HCT116 (cell line): ENCODE measurements at regions of chr3 and their contacts with region 1.

Region 1: GRCh38 chr3:6799264-6799915 is 61.5 kb upstream of the GRM7 start:
- DNase-seq: peak; percentile 19
- ATAC-seq: peak; percentile 74; the same call in 1 of the 2 replicates
- H3K4me3 ChIP-seq: no peak overlapping the region
- H3K27ac ChIP-seq: no peak overlapping the region
- H3K4me1 ChIP-seq: no peaks in the 10 kb centered on the region
- H3K27me3 ChIP-seq: no peaks in the 10 kb centered on the region
- CTCF ChIP-seq: peak; percentile 27 to 81 (median 80); a peak in 5 of 6 replicates
- POLR2A ChIP-seq: no peak
- RAD21 ChIP-seq: peak; percentile 62

Region 2: GRCh38 chr3:5426094-5426883 is 1373.1 kb before region 1 on chr3:
- CTCF ChIA-PET with region 1: no interaction called
- POLR2A ChIA-PET with region 1: no interaction called
- RAD21 ChIA-PET with region 1: no interaction called
- intact Hi-C with region 1: loop called (anchors 10 kb)
- DNase-seq: peak; percentile 71
- ATAC-seq: peak; percentile 100
- H3K4me3 ChIP-seq: no peak overlapping the region
- H3K27ac ChIP-seq: no peak overlapping the region
- H3K4me1 ChIP-seq: peaks cover 0 to 4% of the 10 kb centered on the region in 2 experiments; a peak in 1 of 4 replicates
- H3K27me3 ChIP-seq: no peaks in the 10 kb centered on the region
- CTCF ChIP-seq: peak; percentile 59 to 96 (median 93); a peak in 5 of 6 replicates
- POLR2A ChIP-seq: no peak
- RAD21 ChIP-seq: peak; percentile 88

Region 3: DNA sequence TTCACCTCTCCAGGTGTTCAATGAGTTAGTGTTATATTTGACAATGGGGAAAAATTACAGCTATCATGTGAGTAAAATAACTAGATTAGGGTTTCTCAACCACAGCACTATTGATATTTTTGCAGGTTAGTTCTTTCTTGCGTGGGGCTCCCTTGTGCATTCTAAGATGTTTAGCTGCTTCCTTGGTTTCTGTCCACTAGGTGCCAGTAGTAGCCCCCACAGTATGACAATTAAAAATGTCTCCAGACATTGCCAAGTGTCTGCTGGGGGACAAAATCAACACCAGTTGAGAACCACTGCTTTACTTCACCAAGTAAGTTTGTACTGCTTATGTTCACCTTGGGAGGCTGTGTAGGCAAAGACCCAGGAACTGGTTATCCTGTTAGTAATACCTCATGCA is 993.2 kb before region 1 on chr3:
- CTCF ChIA-PET with region 1: no interaction called
- POLR2A ChIA-PET with region 1: no interaction called
- RAD21 ChIA-PET with region 1: no interaction called
- intact Hi-C with region 1: loop called (anchors 5 kb)
- DNase-seq: no peak
- ATAC-seq: peak; percentile 82
- H3K4me3 ChIP-seq: no peak overlapping the region
- H3K27ac ChIP-seq: no peak overlapping the region
- H3K4me1 ChIP-seq: no peaks in the 10 kb centered on the region
- H3K27me3 ChIP-seq: no peaks in the 10 kb centered on the region
- CTCF ChIP-seq: peak; percentile 30 to 61 (median 58); a peak in 5 of 6 replicates
- POLR2A ChIP-seq: no peak
- RAD21 ChIP-seq: peak; percentile 55

Region 4: DNA sequence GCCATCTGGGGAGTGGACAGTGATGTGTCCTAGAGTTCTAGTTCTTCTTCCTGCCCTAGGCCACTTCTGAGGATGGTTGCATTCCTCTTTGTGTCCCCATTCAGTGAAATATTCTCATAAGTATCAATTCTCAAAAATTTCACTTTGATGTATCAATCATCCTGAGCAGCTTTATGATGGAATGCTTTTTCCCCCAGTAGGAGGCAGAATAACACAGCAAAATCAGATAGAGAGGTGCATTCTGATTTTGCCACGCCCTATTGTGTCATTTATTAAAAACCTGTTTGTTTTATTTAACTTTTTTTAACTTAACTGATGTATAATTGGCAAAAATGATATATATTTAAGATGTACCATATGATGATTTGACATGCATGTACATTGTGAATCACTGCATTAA is 594.5 kb before region 1 on chr3:
- CTCF ChIA-PET with region 1: no interaction called
- POLR2A ChIA-PET with region 1: no interaction called
- RAD21 ChIA-PET with region 1: no interaction called
- intact Hi-C with region 1: loop called (anchors 5 kb)
- DNase-seq: no peak
- ATAC-seq: no peak
- H3K4me3 ChIP-seq: no peak overlapping the region
- H3K27ac ChIP-seq: no peak overlapping the region
- H3K4me1 ChIP-seq: no peaks in the 10 kb centered on the region
- H3K27me3 ChIP-seq: no peaks in the 10 kb centered on the region
- CTCF ChIP-seq: peak; percentile 13 to 55 (median 32); a peak in 4 of 6 replicates
- POLR2A ChIP-seq: no peak
- RAD21 ChIP-seq: peak; percentile 44; the same call in 1 of the 2 replicates

Region 5: GRCh38 chr3:6860954-6861624 is 61.7 kb after region 1 on chr3 and contains the start of gene GRM7:
- CTCF ChIA-PET with region 1: no interaction called
- POLR2A ChIA-PET with region 1: no interaction called
- RAD21 ChIA-PET with region 1: no interaction called
- intact Hi-C with region 1: no loop called
- DNase-seq: no peak
- ATAC-seq: no peak
- H3K4me3 ChIP-seq: no peak within 1 kb of the TSS
- H3K27ac ChIP-seq: no peak within 1 kb of the TSS
- H3K4me1 ChIP-seq: no peaks in the 10 kb centered on the region
- H3K27me3 ChIP-seq: no peaks in the 10 kb centered on the region
- CTCF ChIP-seq: no peak
- POLR2A ChIP-seq: no peak
- RAD21 ChIP-seq: no peak
- total RNA-seq, gene GRM7: not detected

Region 6: DNA sequence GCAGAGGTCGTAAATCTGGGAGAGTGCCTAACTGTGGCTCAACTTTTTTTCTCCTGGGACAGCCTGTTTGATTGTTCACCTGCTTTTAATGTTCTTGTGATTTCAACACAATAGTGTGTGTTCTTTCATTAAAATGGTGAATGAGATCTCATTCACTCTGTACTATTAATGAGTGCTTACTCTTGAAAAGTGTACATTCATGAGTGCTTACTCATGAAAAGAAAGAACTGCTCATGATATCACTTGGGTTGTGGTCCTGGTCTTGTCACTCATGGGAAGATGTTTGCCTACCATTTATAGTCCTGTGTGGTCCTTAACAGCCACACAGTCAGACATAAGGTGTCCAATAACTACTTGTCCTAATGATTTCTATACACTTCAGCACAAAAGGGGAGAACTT is 628.9 kb after region 1 on chr3:
- CTCF ChIA-PET with region 1: no interaction called
- POLR2A ChIA-PET with region 1: no interaction called
- RAD21 ChIA-PET with region 1: no interaction called
- intact Hi-C with region 1: no loop called
- DNase-seq: no peak
- ATAC-seq: no peak
- H3K4me3 ChIP-seq: no peak overlapping the region
- H3K27ac ChIP-seq: no peak overlapping the region
- H3K4me1 ChIP-seq: no peaks in the 10 kb centered on the region
- H3K27me3 ChIP-seq: no peaks in the 10 kb centered on the region
- CTCF ChIP-seq: no peak
- POLR2A ChIP-seq: no peak
- RAD21 ChIP-seq: no peak